ENCODE measurements at regions of chr14 and their contacts with region 1.

Region 1: DNA sequence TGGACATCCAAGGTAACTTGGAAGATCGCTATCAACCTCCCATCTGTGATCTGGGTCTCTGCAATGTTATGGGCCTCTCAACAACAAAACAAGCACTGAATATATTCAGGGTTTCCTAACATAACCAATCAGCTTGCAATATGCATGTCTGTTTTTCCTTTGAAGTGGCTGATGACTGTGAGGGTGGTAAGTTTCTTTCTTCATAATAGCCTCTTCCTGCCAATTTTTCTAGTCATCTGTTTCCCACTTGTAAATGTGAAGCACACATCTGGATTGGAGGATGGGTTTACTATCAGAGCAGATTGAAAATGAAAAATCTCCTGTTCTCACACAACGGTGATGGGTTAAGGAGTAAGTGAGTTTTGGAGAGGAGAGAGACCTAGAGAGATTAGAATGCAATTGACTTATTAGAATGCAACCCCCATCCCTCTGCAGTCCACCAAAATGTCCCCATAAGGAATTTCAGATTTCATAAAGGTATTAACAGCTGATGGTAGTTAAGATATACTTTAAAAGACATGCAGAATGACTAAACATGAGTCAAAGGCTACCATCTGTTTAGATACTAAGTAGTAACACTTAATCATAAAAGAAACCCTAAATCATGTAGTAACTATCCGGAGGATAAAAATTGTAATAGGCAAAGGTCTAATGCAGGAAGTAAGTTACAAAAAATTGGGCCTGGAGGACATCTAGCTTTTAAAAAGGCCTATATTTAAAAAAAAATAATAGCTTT is 58.4 kb upstream of the SAV1 start:
- DNase-seq: peak; percentile 48
- H3K4me3 Mint-ChIP-seq: peak overlapping the region; percentile 3
- H3K27ac Mint-ChIP-seq: peak overlapping the region; percentile 83
- H3K4me1 Mint-ChIP-seq: peaks cover 28% of the 10 kb centered on the region
- H3K27me3 Mint-ChIP-seq: no peaks in the 10 kb centered on the region

Region 2: DNA sequence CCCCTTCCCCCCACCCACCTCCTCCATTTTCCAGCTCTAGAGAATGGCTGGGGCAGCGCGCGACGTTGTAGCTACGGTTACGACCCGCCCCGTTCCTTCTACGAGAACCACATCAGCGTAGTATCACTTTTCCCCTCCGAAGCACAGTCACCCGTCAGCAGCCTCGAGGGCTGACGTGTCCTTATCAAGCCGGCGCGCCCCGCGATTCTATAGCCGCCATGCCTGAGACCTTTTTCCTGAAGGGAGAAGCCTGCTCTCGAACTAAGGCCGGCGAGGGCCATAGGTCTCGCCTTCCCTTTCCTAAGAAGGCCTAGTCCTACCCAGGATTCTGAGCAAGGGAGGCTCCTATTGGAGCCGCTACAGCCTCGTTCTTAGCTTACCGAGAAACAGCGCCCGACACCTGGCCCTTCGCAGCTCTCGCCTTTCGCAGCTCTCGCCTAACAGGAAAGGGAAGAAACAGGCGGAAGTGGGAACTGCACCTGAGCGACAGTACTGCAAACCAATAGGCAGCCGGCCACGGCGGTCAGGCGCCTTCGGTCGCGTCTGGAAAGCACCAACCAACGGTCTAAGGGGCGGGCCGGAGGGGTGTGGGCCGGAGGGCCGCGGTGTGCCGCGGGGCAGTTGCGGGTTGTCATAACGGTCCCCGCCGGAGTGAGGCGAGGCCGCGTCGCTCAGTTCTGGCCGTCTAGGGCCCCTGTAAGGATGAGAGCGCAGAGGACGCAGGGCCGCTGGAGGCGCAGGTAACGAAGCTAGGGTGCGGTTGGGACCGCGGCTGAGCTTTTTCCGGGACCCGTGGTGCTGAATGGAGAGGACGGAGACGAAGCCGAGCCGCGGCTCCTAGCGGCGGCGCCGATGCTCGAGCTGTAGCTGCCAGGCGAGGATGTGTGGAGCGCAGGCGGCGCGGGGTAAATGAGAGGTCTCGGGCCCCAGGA is 1106.1 kb before region 1 on chr14 and contains the starts of genes MGAT2 and RPL36AL:
- CTCF ChIA-PET with region 1: no interaction called
- intact Hi-C with region 1: loop called (anchors 2 kb)
- DNase-seq: peak; percentile 97
- H3K4me3 Mint-ChIP-seq: peak within 1 kb of the TSS; percentile 97
- H3K27ac Mint-ChIP-seq: peak within 1 kb of the TSS; percentile 97
- H3K4me1 Mint-ChIP-seq: peaks cover 52% of the 10 kb centered on the region
- H3K27me3 Mint-ChIP-seq: no peaks in the 10 kb centered on the region
- total RNA-seq, gene MGAT2: 20.6 to 20.7 TPM
- total RNA-seq, gene RPL36AL: 250 to 266 TPM

Region 3: DNA sequence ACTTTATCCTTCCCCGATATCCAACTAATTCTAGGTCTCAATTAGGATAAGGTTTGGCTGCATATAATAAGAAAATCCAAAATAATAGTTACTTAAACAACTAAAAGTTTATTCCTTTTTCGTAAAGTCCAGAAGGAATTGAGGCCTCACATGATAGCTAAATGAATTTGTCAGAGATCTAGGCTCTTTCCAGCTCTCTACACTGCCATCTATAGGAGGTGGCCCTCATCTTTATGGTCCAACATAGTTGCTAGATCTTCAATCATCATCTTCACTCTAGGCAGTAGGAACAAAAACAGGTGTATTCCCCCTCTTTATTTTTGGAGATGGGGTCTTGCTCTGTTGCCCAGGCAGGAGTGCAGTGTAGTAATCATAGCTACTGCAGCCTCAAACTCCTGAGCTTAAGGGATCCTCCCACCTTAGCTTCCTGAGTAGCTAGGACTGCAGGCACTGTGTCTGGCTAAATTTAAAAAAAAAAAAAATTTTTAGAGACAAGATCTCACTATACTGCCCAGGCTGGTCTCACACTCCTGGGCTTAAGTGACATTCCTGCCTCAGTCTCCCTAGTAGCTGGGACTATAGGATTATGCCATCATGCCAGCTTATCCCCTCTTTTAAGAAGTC is 12.0 kb before region 1 on chr14:
- CTCF ChIA-PET with region 1: interaction called, 16 read pairs
- intact Hi-C with region 1: no loop called
- DNase-seq: peak; percentile 30
- H3K4me3 Mint-ChIP-seq: no peak overlapping the region
- H3K27ac Mint-ChIP-seq: no peak overlapping the region
- H3K4me1 Mint-ChIP-seq: no peaks in the 10 kb centered on the region
- H3K27me3 Mint-ChIP-seq: peaks cover 3% of the 10 kb centered on the region

Region 4: GRCh38 chr14:50762001-50762930 is 35.7 kb after region 1 on chr14:
- CTCF ChIA-PET with region 1: interaction called, 3 read pairs
- intact Hi-C with region 1: loop called (anchors 1 kb)
- DNase-seq: peak; percentile 74
- H3K4me3 Mint-ChIP-seq: no peak overlapping the region
- H3K27ac Mint-ChIP-seq: no peak overlapping the region
- H3K4me1 Mint-ChIP-seq: peaks cover 28% of the 10 kb centered on the region
- H3K27me3 Mint-ChIP-seq: no peaks in the 10 kb centered on the region

Region 5: GRCh38 chr14:50813544-50813863 is 87.0 kb after region 1 on chr14:
- CTCF ChIA-PET with region 1: no interaction called
- intact Hi-C with region 1: loop called (anchors 1 kb)
- DNase-seq: peak; percentile 45
- H3K4me3 Mint-ChIP-seq: peak overlapping the region; percentile 75
- H3K27ac Mint-ChIP-seq: peak overlapping the region; percentile 98
- H3K4me1 Mint-ChIP-seq: peaks cover 55% of the 10 kb centered on the region
- H3K27me3 Mint-ChIP-seq: no peaks in the 10 kb centered on the region

Region 6: GRCh38 chr14:50875359-50876070 is 149.0 kb after region 1 on chr14:
- CTCF ChIA-PET with region 1: no interaction called
- intact Hi-C with region 1: loop called (anchors 1 kb)
- DNase-seq: peak; percentile 89
- H3K4me3 Mint-ChIP-seq: no peak overlapping the region
- H3K27ac Mint-ChIP-seq: no peak overlapping the region
- H3K4me1 Mint-ChIP-seq: peaks cover 26% of the 10 kb centered on the region
- H3K27me3 Mint-ChIP-seq: peaks cover 51% of the 10 kb centered on the region

Region 7: GRCh38 chr14:50901361-50901760 is 174.8 kb after region 1 on chr14:
- CTCF ChIA-PET with region 1: no interaction called
- intact Hi-C with region 1: no loop called
- DNase-seq: no peak
- H3K4me3 Mint-ChIP-seq: no peak overlapping the region
- H3K27ac Mint-ChIP-seq: no peak overlapping the region
- H3K4me1 Mint-ChIP-seq: no peaks in the 10 kb centered on the region
- H3K27me3 Mint-ChIP-seq: no peaks in the 10 kb centered on the region

Measured in activated naive CD4-positive, alpha-beta T cell treated with anti-CD3 and anti-CD28 coated beads for 36 hours (primary cell).